Mammary epithelial cell (primary cell): ENCODE measurements at regions of chr16 and their contacts with region 1.

Region 1: DNA sequence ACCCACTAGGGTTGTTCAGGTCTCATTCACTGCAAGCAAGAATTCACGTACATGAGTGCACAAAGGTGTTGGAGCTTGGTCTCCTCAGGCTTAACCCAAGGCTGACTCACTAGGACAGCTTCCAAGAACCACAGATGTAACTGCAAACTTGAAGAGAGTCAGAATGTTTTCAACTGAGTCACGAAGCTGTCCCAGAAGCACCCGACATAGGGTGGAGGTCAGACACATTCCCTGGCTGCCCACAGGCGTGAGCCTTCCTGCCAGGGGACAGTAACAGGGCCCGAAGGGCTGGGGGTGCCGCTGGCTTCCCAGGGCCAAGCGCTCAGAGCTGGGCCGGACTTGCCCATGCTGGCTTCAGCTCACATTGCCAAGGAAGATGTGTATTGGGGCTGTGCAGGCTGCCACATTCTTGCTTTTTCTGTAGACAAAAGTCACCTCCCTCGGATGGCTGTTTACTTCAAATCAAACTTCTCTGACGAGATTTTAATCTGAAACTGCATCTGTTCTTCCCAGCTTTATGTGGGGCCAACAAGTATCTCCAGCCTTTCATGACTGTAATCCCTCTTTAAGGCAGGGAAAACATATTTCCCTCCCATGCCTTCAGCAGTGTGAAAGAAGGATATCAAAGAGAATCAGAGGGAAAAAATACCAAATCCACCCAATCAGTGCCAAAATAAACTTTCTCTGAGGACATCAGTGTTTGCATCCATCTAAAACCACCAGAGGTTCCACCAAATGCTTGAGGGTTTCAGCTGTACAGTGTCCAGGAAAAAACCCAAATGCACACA is 14.3 kb downstream of the CMTM3 start:
- DNase-seq: peak; percentile 96
- H3K4me3 ChIP-seq: no peak overlapping the region
- H3K27ac ChIP-seq: peak overlapping the region; percentile 66
- H3K4me1 ChIP-seq: peaks cover 44% of the 10 kb centered on the region
- H3K27me3 ChIP-seq: no peaks in the 10 kb centered on the region
- CTCF ChIP-seq: no peak

Region 2: DNA sequence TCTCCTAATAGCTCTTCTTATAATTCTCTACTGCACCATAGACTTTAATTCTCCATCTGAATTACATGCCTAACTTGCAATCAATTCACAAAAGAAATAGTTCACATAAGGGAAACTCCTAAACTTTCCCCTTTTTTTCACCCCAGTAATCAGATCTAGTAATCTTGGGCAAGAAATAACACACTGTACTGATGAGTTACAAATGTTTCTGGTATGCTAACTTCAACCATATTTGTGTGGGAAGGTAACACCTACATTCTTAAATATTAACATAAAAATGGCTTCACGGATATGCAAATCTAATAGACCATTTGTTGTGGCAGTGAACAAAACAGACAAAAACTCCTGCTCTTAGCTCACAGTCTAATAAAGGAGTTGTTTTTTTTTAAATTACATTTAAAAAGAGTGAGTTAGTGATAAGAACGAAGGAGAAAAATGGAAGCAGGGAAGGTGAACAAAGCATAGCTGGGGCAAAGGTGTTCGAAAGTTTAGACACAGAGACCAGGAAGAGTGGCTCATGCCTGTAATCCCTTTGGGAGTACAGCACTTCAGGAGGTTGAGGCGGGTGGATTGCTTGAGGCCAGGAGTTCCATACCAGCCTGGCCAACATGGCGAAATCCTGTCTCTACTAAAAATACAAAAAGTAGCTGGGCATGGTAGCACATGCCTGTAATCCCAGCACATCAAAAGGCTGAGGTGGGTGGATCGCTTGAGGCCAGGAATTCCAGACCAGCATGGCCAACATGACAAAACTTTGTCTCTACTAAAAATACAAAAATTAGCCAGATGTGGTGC is 20.5 kb after region 1 on chr16:
- CTCF ChIA-PET with region 1: no interaction called
- dilution Hi-C with region 1: no loop called
- in situ Hi-C with region 1: no loop called
- intact Hi-C with region 1: loop called (anchors 2 kb)
- DNase-seq: peak; percentile 80
- H3K4me3 ChIP-seq: peak overlapping the region in 1 of 3 experiments; percentile 23
- H3K27ac ChIP-seq: peak overlapping the region; percentile 96
- H3K4me1 ChIP-seq: peaks cover 23% of the 10 kb centered on the region
- H3K27me3 ChIP-seq: no peaks in the 10 kb centered on the region
- CTCF ChIP-seq: no peak

Region 3: GRCh38 chr16:66859397-66860068 is 240.8 kb after region 1 on chr16:
- CTCF ChIA-PET with region 1: no interaction called
- dilution Hi-C with region 1: no loop called
- in situ Hi-C with region 1: loop called (anchors 10 to 25 kb)
- intact Hi-C with region 1: no loop called
- DNase-seq: no peak
- H3K4me3 ChIP-seq: no peak overlapping the region
- H3K27ac ChIP-seq: no peak overlapping the region
- H3K4me1 ChIP-seq: no peaks in the 10 kb centered on the region
- H3K27me3 ChIP-seq: no peaks in the 10 kb centered on the region
- CTCF ChIP-seq: no peak